ENCODE measurements at regions of chr11 and their contacts with region 1.

Region 1: DNA sequence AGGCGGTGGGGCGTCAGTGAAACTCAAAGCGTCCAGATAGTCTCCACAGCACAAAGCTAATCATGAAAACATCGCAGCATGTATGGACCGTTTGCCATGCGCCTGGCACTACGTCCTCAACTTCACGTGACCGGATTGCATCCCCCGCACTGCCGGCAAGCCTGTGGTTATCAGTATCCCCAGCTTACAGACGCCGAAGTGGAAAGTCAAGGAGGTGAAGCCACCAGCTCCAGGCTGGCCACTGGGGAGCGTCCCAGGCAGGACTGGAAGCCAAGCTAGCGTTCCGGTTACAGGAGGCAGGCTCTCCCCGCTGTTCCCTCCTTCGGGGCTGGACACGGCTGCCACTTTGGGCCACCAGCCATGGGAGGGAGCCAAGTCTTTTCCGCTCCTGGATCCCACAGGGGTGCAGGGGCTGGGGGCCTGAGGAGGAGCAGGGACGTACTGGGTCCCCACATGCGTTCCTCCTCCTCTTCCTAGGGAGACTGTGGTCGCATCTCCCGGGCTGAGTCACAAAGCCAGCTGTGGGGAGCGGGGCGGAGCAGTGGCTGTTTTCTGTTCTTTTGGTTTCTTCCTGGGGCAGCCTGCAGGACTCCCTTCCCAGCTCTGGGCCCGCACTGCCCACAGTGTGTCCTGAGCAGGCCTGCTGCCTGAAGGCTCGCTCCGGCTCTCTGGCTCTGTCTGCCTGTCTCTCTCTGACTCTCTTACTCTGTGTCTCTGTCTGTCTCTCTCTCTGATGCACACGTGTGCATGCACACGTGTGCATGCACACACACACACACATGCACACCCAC is 4.3 kb upstream of the OSBPL5 start:
- DNase-seq: no peak
- H3K4me3 ChIP-seq: peak overlapping the region; percentile 41
- H3K27me3 ChIP-seq: peaks cover 6% of the 10 kb centered on the region; the same call in 1 of the 2 replicates
- CTCF ChIP-seq: 0 out of 2 replicates have a peak, but pooled peaks have one; percentile 17

Region 2: GRCh38 chr11:3009481-3009880 is 160.0 kb before region 1 on chr11:
- CTCF ChIA-PET with region 1: no interaction called
- POLR2A ChIA-PET with region 1: interaction called, 22 read pairs
- DNase-seq: no peak
- H3K4me3 ChIP-seq: no peak overlapping the region
- H3K27me3 ChIP-seq: no peaks in the 10 kb centered on the region
- CTCF ChIP-seq: no peak

Measured in BJ (cell line).